Colonic mucosa (tissue), 4 donors: ENCODE measurements at regions of chr5 and their contacts with region 1.

Region 1: GRCh38 chr5:77906806-77907205 is 130.7 kb upstream of the TBCA start:
- DNase-seq: no peak
- H3K4me3 ChIP-seq: no peak overlapping the region
- H3K27ac ChIP-seq: no peak overlapping the region
- H3K4me1 ChIP-seq: no peaks in the 10 kb centered on the region
- H3K27me3 ChIP-seq: no peaks in the 10 kb centered on the region
- CTCF ChIP-seq: no peak

Region 2: GRCh38 chr5:77590347-77590746 is 316.5 kb before region 1 on chr5:
- intact Hi-C with region 1: no loop called
- DNase-seq: no peak
- H3K4me3 ChIP-seq: no peak overlapping the region
- H3K27ac ChIP-seq: no peak overlapping the region
- H3K4me1 ChIP-seq: no peaks in the 10 kb centered on the region
- H3K27me3 ChIP-seq: no peaks in the 10 kb centered on the region
- CTCF ChIP-seq: no peak

Region 3: DNA sequence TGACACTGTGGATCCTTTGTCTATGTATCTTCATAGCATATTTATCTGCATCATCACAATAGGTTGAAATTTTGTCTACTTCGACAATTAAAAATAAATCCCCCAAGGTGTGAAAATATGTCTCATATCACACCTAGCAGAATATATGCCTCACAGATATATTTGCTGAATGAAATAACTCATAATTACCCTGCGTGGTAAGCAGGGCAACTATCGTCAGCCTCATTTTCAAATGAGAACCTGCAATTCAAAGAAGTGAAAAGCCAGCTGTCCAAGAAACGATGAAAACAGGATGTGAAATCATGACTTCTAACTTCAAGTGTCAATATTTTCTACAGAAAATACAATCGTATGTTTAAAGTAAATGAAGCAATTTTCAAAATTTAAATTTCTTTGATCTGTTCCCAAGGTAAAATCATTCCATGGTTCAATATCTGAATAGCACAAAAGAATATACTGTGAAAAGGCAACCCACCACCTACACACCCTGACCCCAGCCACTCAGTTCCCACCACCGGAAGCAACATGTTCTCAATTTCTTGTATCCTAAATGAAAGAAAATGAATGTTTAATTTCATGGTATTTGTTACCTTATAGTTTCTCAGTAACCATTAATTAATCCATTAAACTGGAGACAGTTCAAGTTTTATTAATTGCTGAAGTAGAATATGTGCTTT is 187.7 kb before region 1 on chr5:
- intact Hi-C with region 1: no loop called
- DNase-seq: no peak
- H3K4me3 ChIP-seq: no peak overlapping the region
- H3K27ac ChIP-seq: no peak overlapping the region
- H3K4me1 ChIP-seq: no peaks in the 10 kb centered on the region
- H3K27me3 ChIP-seq: no peaks in the 10 kb centered on the region
- CTCF ChIP-seq: no peak

Region 4: DNA sequence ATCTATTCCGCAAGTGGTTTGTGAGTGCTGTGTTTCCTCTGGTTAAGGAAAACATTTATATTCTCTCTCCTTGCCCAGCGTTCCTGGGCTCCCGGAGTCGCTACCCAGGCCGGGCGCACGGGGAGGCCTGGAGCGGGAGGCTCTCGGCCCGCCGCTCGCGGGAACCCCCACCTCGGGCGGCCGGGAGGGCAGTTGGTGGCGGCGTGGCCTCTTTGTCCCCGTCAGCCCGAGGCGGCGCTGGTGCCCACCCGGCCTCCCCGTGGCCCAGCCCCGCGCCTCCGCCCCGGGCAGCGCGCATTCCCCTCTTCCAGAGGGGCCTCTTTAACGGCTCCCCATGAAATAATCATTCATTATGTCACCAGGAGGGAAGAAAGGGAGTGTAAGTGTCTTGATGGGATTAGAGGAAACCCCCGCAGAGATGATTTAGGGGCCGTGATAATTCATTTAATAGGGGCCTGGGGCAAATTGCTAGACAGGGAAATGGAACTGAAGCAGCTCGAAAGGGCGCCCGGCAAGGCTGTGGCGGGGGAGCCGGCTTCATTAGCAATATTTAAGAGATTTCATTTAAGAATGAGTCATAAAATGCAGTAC is 51.2 kb after region 1 on chr5:
- intact Hi-C with region 1: loop called (anchors 10 kb)
- DNase-seq: no peak
- H3K4me3 ChIP-seq: no peak overlapping the region
- H3K27ac ChIP-seq: no peak overlapping the region
- H3K4me1 ChIP-seq: no peaks in the 10 kb centered on the region
- H3K27me3 ChIP-seq: peaks cover 15% of the 10 kb centered on the region
- CTCF ChIP-seq: no peak